ENCODE measurements at regions of chrX and their contacts with region 1.

Region 1: DNA sequence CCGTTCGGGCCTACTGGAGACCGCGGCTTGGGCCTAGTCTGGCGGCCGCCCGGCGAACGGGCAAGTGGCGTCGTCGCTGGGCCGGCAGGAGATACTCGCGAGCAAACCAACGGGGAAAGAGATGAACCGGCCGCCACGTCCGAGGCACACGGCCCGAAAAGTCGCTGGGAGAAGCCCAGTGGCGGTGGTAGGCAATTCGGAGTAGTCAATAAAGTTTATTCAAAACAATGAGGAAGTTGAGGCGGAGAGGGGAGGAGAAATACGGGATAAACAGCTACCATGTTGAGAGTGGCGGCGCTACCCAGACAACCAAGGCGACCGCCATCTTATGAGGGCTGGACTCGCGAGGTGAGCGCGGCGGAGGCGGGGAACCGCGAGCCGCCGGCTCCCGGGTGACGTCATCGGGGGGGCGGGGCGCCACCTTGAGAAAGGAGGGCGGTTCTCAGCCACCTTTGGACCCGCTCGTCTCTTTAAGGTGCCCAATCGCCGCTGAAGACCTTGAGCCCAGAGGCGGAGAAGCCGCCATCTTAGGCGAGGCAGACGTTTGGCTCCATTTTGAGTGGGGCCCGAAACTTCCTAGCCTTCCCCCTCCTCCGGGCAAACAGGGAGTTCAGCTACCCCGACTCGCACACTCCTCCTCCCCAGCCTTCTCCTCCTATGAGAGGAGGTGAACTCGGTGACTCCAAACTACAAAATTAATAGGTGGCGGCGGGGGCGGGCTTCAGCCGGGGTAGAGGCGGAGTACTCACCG is at the start of gene PHF8:
- DNase-seq: peak; percentile 97
- total RNA-seq, gene PHF8: 12.3 TPM

Region 2: GRCh38 chrX:53683556-53684414 is 360.5 kb before region 1 on chrX:
- intact Hi-C with region 1: loop called (anchors 2 kb)
- DNase-seq: peak; percentile 95

Region 3: DNA sequence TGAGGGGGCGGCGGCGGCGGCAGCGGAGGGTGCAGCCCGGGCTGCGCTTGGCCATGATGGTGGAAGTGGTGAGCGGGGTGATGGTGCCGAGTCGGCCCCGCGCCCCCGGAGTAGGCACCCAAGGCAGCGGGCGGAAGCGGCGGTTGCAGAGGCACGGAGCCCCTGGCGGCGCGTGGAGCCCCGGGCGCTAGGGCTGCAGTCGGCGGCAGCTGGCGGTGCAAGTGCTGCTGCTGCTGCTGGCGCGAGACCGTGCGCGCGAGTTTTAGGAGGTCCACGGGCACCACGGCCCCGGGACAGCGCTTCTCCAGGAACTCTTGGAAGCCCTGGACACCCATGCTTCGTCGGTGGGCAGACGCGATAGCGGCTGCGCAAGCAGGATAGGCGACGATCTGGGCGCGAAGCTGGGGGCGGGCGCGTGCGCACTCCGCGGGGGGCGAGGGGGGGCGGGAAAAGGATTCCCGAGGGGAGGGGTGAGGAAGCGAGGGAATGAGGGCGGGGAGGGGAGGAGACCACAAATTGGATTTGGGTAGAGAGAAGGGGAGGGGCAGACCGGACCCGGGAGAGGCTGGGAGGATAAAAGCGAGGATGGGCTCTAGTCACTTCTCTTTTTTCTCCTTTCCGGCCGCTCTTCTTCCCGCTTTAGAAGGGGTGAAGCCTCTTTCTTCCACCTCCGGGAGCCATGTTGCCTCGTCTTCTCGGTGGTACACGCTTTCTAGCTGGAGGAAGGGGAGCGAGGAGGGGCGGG is 138.7 kb after region 1 on chrX and contains the start of gene FAM120C:
- intact Hi-C with region 1: loop called (anchors 5 kb)
- DNase-seq: peak; percentile 81
- total RNA-seq, gene FAM120C: 7.0 TPM

Region 4: DNA sequence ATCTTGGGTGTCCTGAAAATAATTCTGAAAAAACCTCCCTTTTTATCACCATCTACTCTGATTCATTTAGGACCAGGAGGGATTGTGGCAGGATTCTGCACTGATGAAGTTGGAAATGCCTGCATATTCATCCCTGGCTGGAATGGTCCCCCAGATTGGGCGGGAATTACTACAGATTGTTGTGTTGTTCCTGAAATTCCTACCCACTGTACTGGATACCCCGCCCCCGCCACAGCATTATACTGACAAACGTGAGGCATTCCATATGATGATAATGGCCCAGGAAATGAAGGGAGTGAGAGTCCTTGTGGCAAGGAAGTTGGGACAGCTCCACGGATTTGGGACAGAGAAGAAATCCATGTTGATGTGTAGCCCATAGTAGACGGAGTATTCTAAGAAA is 154.0 kb after region 1 on chrX:
- intact Hi-C with region 1: no loop called
- DNase-seq: no peak